Left colon (tissue), 2 donors: ENCODE measurements at regions of chr12 and their contacts with region 1.

Region 1: GRCh38 chr12:14257734-14258574 is 107.5 kb upstream of the ATF7IP start:
- DNase-seq: peak; percentile 92 to 93
- ATAC-seq: peak; percentile 63

Region 2: GRCh38 chr12:14086838-14087237 is 171.1 kb before region 1 on chr12:
- intact Hi-C with region 1: no loop called
- DNase-seq: no peak
- ATAC-seq: peak; percentile 90

Region 3: GRCh38 chr12:14157088-14157747 is 100.7 kb before region 1 on chr12:
- intact Hi-C with region 1: no loop called
- DNase-seq: no peak
- ATAC-seq: no peak

Region 4: GRCh38 chr12:14365294-14366208 is 107.6 kb after region 1 on chr12 and contains the start of gene ATF7IP:
- intact Hi-C with region 1: loop called (anchors 2 to 10 kb)
- DNase-seq: peak; percentile 97
- ATAC-seq: peak; percentile 95
- total RNA-seq, gene ATF7IP: 42.9 to 46.3 TPM

Region 5: GRCh38 chr12:14417715-14418114 is 159.8 kb after region 1 on chr12:
- intact Hi-C with region 1: loop called in 1 of 2 experiments (anchors 10 kb)
- DNase-seq: peak; percentile 50 to 54
- ATAC-seq: peak; percentile 69